Posterior vena cava (tissue), 2 donors: ENCODE measurements at regions of chr3 and their contacts with region 1.

Region 1: GRCh38 chr3:72694398-72694797 is 153.8 kb downstream of the SHQ1 start:
- DNase-seq: no peak

Region 2: GRCh38 chr3:72720566-72720965 is 26.2 kb after region 1 on chr3:
- intact Hi-C with region 1: loop called in 1 of 2 experiments (anchors 1 kb)
- DNase-seq: no peak

Region 3: GRCh38 chr3:73086071-73086494 is 391.7 kb after region 1 on chr3:
- intact Hi-C with region 1: no loop called
- DNase-seq: no peak